ENCODE measurements at regions of chr11 and their contacts with region 1.

Region 1: GRCh38 chr11:124746621-124747243 is 5.3 kb downstream of the VSIG2 start:
- DNase-seq: peak; percentile 64
- H3K4me3 Mint-ChIP-seq: peak overlapping the region; percentile 89
- H3K27ac Mint-ChIP-seq: peak overlapping the region; percentile 86
- H3K4me1 Mint-ChIP-seq: peaks cover 28% of the 10 kb centered on the region
- H3K27me3 Mint-ChIP-seq: peaks cover 12% of the 10 kb centered on the region

Region 2: GRCh38 chr11:124793466-124794278 is 46.9 kb after region 1 on chr11:
- intact Hi-C with region 1: loop called (anchors 1 kb)
- DNase-seq: peak; percentile 3
- H3K4me3 Mint-ChIP-seq: no peak overlapping the region
- H3K27ac Mint-ChIP-seq: no peak overlapping the region
- H3K4me1 Mint-ChIP-seq: peaks cover 36% of the 10 kb centered on the region
- H3K27me3 Mint-ChIP-seq: no peaks in the 10 kb centered on the region